ENCODE measurements at regions of chr15 and their contacts with region 1.

Region 1: GRCh38 chr15:43285609-43286037 is 18.9 kb upstream of the TGM5 start:
- DNase-seq: peak; percentile 56
- ATAC-seq: peak; percentile 89
- H3K4me3 ChIP-seq: no peak overlapping the region
- H3K27ac ChIP-seq: no peak overlapping the region
- H3K4me1 ChIP-seq: no peaks in the 10 kb centered on the region
- H3K27me3 ChIP-seq: peaks cover 9% of the 10 kb centered on the region; the same call in 1 of the 2 replicates
- CTCF ChIP-seq: peak; percentile 73 to 89 (median 79); a peak in 5 of 6 replicates
- POLR2A ChIP-seq: no peak
- RAD21 ChIP-seq: peak; percentile 87

Region 2: GRCh38 chr15:42704492-42704926 is 581.1 kb before region 1 on chr15:
- CTCF ChIA-PET with region 1: interaction called, 4 read pairs
- POLR2A ChIA-PET with region 1: no interaction called
- RAD21 ChIA-PET with region 1: no interaction called
- intact Hi-C with region 1: loop called (anchors 10 kb)
- DNase-seq: peak; percentile 47
- ATAC-seq: peak; percentile 100
- H3K4me3 ChIP-seq: no peak overlapping the region
- H3K27ac ChIP-seq: no peak overlapping the region
- H3K4me1 ChIP-seq: 0 out of 4 replicates have a peak, but pooled peaks cover 0 to 3% of the 10 kb centered on the region in 2 experiments
- H3K27me3 ChIP-seq: no peaks in the 10 kb centered on the region
- CTCF ChIP-seq: peak; percentile 56 to 92 (median 91); a peak in 5 of 6 replicates
- POLR2A ChIP-seq: no peak
- RAD21 ChIP-seq: peak; percentile 83

Region 3: GRCh38 chr15:42736793-42737528 is 548.7 kb before region 1 on chr15 and contains the start of gene CDAN1:
- CTCF ChIA-PET with region 1: interaction called, 16 read pairs
- POLR2A ChIA-PET with region 1: no interaction called
- RAD21 ChIA-PET with region 1: interaction called in 1 of 2 experiments, 3 read pairs
- intact Hi-C with region 1: loop called (anchors 10 kb)
- DNase-seq: peak; percentile 38
- ATAC-seq: peak; percentile 93
- H3K4me3 ChIP-seq: peak within 1 kb of the TSS; percentile 69 to 85
- H3K27ac ChIP-seq: peak within 1 kb of the TSS; percentile 88
- H3K4me1 ChIP-seq: peaks cover 12 to 16% of the 10 kb centered on the region in 2 experiments; a peak in 3 of 4 replicates
- H3K27me3 ChIP-seq: no peaks in the 10 kb centered on the region
- CTCF ChIP-seq: no peak
- POLR2A ChIP-seq: peak; percentile 69
- RAD21 ChIP-seq: no peak
- total RNA-seq, gene CDAN1: 22.4 TPM

Region 4: GRCh38 chr15:42920519-42921227 is 364.9 kb before region 1 on chr15 and contains the start of gene TTBK2:
- CTCF ChIA-PET with region 1: no interaction called
- POLR2A ChIA-PET with region 1: no interaction called
- RAD21 ChIA-PET with region 1: no interaction called
- intact Hi-C with region 1: loop called (anchors 10 kb)
- DNase-seq: peak; percentile 98
- ATAC-seq: peak; percentile 98
- H3K4me3 ChIP-seq: peak within 1 kb of the TSS; percentile 75
- H3K27ac ChIP-seq: peak within 1 kb of the TSS; percentile 46; the same call in 1 of the 2 replicates
- H3K4me1 ChIP-seq: peaks cover 5 to 15% of the 10 kb centered on the region in 2 experiments
- H3K27me3 ChIP-seq: no peaks in the 10 kb centered on the region
- CTCF ChIP-seq: no peak
- POLR2A ChIP-seq: peak; percentile 30
- RAD21 ChIP-seq: no peak
- total RNA-seq, gene TTBK2: 10.6 TPM

Region 5: GRCh38 chr15:43185157-43186017 is 100.2 kb before region 1 on chr15 and contains the start of gene CCNDBP1:
- CTCF ChIA-PET with region 1: interaction called, 4 read pairs
- POLR2A ChIA-PET with region 1: no interaction called
- RAD21 ChIA-PET with region 1: no interaction called
- intact Hi-C with region 1: loop called (anchors 5 kb)
- DNase-seq: peak; percentile 84
- ATAC-seq: peak; percentile 98
- H3K4me3 ChIP-seq: peak within 1 kb of the TSS; percentile 75 to 82
- H3K27ac ChIP-seq: peak within 1 kb of the TSS; percentile 54
- H3K4me1 ChIP-seq: peaks cover 10 to 19% of the 10 kb centered on the region in 2 experiments
- H3K27me3 ChIP-seq: no peaks in the 10 kb centered on the region
- CTCF ChIP-seq: peak in 2 of 3 experiments; percentile 46 to 49; a peak in 4 of 6 replicates
- POLR2A ChIP-seq: peak; percentile 53
- RAD21 ChIP-seq: peak; percentile 7; the same call in 1 of the 2 replicates
- total RNA-seq, gene CCNDBP1: 39.8 TPM

Region 6: GRCh38 chr15:43225201-43225949 is 60.2 kb before region 1 on chr15:
- CTCF ChIA-PET with region 1: interaction called, 81 read pairs
- POLR2A ChIA-PET with region 1: no interaction called
- RAD21 ChIA-PET with region 1: interaction called, 11 to 13 read pairs
- intact Hi-C with region 1: loop called (anchors 1 kb)
- DNase-seq: peak; percentile 56
- ATAC-seq: peak; percentile 99
- H3K4me3 ChIP-seq: no peak overlapping the region
- H3K27ac ChIP-seq: no peak overlapping the region
- H3K4me1 ChIP-seq: no peaks in the 10 kb centered on the region
- H3K27me3 ChIP-seq: no peaks in the 10 kb centered on the region
- CTCF ChIP-seq: peak; percentile 75 to 85 (median 83)
- POLR2A ChIP-seq: no peak
- RAD21 ChIP-seq: peak; percentile 81

Region 7: DNA sequence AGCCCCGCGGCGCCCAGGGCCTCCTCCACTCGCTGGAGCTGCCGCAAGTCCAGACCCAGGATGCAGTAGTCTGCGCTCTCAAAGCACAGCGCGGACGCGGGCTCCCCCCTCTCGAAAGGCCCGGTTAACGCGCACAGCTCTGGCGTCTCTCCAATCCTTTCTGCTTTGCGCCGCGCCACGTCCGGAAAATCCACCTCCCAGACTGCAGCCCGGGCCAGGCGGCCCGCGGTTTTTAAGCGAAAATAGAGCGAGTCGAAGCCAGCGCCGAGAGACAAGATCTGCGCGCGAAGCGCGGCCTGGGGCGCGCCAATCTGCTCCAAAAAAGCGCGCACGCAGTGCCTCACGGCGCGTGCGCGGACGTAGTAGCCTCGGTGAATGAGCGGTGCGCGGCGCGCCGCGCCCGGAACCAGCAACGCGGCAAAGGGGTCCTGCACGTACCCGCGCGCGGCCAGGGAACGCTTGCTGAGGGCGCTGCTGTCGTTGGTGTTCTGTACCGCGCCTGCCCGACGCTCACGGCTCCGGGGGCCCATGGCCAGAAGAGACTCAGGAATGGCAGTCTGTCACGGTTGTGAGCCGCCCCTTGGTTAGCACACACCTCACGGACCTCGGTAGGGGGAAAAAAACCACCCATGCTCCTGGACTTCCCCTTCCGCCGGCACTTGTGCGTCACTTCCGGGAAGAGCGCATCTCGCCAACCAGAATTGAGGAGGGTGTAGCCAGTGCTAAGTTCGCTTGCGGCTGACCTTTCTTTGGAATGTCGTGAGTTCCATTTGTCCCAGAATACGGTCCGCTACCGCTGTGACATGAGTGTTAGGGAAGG is 44.5 kb after region 1 on chr15 and contains the start of gene LCMT2:
- CTCF ChIA-PET with region 1: no interaction called
- POLR2A ChIA-PET with region 1: no interaction called
- RAD21 ChIA-PET with region 1: no interaction called
- intact Hi-C with region 1: no loop called
- DNase-seq: peak; percentile 81
- ATAC-seq: peak; percentile 93
- H3K4me3 ChIP-seq: peak within 1 kb of the TSS; percentile 64 to 70
- H3K27ac ChIP-seq: peak within 1 kb of the TSS; percentile 65
- H3K4me1 ChIP-seq: peaks cover 4 to 14% of the 10 kb centered on the region in 2 experiments; a peak in 3 of 4 replicates
- H3K27me3 ChIP-seq: no peaks in the 10 kb centered on the region
- CTCF ChIP-seq: no peak
- POLR2A ChIP-seq: peak; percentile 76
- RAD21 ChIP-seq: no peak
- total RNA-seq, gene LCMT2: 4.7 TPM